Endothelial cell of umbilical vein (primary cell): ENCODE measurements at regions of chr14 and their contacts with region 1.

Region 1: GRCh38 chr14:52068615-52069303 is at the start of gene NID2:
- DNase-seq: peak; percentile 68
- H3K4me3 ChIP-seq: peak within 1 kb of the TSS; percentile 41 to 84 (median 63)
- H3K27ac ChIP-seq: no peak within 1 kb of the TSS
- H3K4me1 ChIP-seq: peaks cover 30% of the 10 kb centered on the region
- H3K27me3 ChIP-seq: peaks cover 0 to 2% of the 10 kb centered on the region in 2 experiments
- CTCF ChIP-seq: no peak
- POLR2A ChIP-seq: no peak
- total RNA-seq, gene NID2: 33.0 and 56.7 TPM in 2 replicates

Region 2: GRCh38 chr14:51318813-51319597 is 749.8 kb before region 1 on chr14:
- CTCF ChIA-PET with region 1: no interaction called
- POLR2A ChIA-PET with region 1: no interaction called
- dilution Hi-C with region 1: no loop called
- intact Hi-C with region 1: no loop called
- DNase-seq: peak; percentile 57
- H3K4me3 ChIP-seq: no peak overlapping the region
- H3K27ac ChIP-seq: no peak overlapping the region
- H3K4me1 ChIP-seq: no peaks in the 10 kb centered on the region
- H3K27me3 ChIP-seq: no peaks in the 10 kb centered on the region
- CTCF ChIP-seq: no peak
- POLR2A ChIP-seq: no peak

Region 3: DNA sequence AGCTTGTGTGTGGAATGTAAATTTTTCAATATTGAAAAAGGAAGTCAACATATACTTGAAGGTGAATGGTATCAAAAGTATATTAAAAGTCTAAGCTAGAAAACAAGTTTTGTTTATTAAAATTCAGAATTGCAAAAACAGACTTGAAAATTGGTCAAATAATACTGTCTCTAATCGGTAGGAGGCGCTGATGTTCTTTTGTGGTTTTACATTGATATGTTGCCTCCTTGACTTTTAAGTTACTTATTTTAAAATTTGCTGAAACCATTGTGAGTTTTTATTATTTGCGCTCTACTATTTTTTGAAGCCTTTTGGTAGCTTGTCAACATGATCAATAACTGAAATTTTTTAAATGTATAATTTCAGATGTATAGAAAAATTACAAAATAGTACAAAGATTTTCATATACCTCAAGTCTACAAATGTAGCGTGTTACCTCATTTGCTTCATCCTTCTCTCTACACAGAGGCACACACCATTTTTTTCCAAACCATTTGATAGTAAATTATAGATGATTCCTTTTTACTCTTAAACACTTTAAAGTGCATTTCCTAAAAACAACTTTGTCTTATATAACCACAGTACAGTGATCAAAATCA is 72.5 kb before region 1 on chr14:
- CTCF ChIA-PET with region 1: interaction called, 52 read pairs
- POLR2A ChIA-PET with region 1: no interaction called
- dilution Hi-C with region 1: no loop called
- intact Hi-C with region 1: loop called (anchors 1 kb)
- DNase-seq: peak; percentile 66
- H3K4me3 ChIP-seq: no peak overlapping the region
- H3K27ac ChIP-seq: no peak overlapping the region
- H3K4me1 ChIP-seq: no peaks in the 10 kb centered on the region
- H3K27me3 ChIP-seq: no peaks in the 10 kb centered on the region
- CTCF ChIP-seq: peak; percentile 37 to 52
- POLR2A ChIP-seq: no peak

Region 4: DNA sequence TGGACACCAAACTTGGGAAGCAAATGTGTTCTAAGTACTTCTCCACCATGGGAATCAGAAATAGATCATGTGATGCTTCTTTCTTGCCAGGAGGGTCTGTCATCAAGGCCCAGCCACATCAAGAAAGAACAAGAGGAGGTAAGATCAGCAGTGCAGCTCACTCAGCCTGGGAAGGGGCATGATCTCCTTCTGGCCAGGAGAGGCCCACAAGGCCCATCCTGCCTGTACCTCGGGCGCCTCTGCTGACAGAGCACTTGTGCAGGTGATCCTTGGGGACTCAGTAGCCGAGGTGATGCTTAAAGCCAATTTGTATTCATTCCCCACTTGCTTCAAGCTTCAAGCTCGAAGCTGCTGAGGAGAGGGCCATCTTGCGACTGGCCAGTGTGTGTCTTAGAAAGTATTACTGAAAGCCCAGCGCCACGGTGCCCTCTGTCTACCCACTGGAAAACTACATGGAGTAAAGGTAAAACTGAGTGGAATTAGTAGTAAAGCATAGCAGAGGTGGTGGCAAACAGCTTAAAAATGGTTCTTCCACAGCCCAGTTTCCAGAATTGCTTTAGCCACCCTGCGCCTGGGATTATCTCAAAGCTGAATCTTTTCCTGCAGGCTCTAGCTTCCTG is 53.2 kb before region 1 on chr14:
- CTCF ChIA-PET with region 1: interaction called, 43 read pairs
- POLR2A ChIA-PET with region 1: no interaction called
- dilution Hi-C with region 1: no loop called
- intact Hi-C with region 1: loop called (anchors 1 kb)
- DNase-seq: peak; percentile 51
- H3K4me3 ChIP-seq: no peak overlapping the region
- H3K27ac ChIP-seq: no peak overlapping the region
- H3K4me1 ChIP-seq: peaks cover 21% of the 10 kb centered on the region
- H3K27me3 ChIP-seq: peaks cover 0 to 2% of the 10 kb centered on the region in 2 experiments
- CTCF ChIP-seq: peak; percentile 40 to 58
- POLR2A ChIP-seq: no peak

Region 5: DNA sequence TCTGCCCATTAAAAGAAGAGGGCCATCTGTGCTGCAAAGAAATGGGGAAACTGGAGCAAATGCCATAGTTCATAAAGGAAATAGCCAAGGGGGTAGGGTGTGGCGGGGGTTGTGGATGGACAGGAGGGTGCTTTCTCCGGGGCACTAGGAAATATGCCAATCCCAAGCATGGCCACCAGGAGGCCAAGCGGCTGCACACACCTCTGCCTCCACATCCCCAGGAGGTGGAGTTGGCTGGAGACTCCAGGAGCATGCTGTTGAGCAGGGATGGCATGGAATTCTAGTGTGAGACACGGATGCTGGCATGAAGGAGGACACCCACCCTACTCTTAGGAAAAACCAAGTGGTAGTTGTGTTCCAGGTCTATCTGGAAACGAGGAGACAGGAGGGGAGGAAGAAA is 25.1 kb before region 1 on chr14:
- CTCF ChIA-PET with region 1: interaction called, 4 read pairs
- POLR2A ChIA-PET with region 1: no interaction called
- dilution Hi-C with region 1: no loop called
- intact Hi-C with region 1: loop called (anchors 2 kb)
- DNase-seq: peak; percentile 37
- H3K4me3 ChIP-seq: no peak overlapping the region
- H3K27ac ChIP-seq: no peak overlapping the region
- H3K4me1 ChIP-seq: peaks cover 4% of the 10 kb centered on the region
- H3K27me3 ChIP-seq: peaks cover 0 to 2% of the 10 kb centered on the region in 2 experiments
- CTCF ChIP-seq: peak; percentile 54 to 76
- POLR2A ChIP-seq: no peak

Region 6: GRCh38 chr14:52131640-52132320 is 63.0 kb after region 1 on chr14:
- CTCF ChIA-PET with region 1: interaction called, 4 read pairs
- POLR2A ChIA-PET with region 1: no interaction called
- dilution Hi-C with region 1: no loop called
- intact Hi-C with region 1: loop called (anchors 1 kb)
- DNase-seq: peak; percentile 86
- H3K4me3 ChIP-seq: no peak overlapping the region
- H3K27ac ChIP-seq: no peak overlapping the region
- H3K4me1 ChIP-seq: peaks cover 3% of the 10 kb centered on the region
- H3K27me3 ChIP-seq: no peaks in the 10 kb centered on the region
- CTCF ChIP-seq: peak; percentile 65 to 78
- POLR2A ChIP-seq: no peak

Region 7: DNA sequence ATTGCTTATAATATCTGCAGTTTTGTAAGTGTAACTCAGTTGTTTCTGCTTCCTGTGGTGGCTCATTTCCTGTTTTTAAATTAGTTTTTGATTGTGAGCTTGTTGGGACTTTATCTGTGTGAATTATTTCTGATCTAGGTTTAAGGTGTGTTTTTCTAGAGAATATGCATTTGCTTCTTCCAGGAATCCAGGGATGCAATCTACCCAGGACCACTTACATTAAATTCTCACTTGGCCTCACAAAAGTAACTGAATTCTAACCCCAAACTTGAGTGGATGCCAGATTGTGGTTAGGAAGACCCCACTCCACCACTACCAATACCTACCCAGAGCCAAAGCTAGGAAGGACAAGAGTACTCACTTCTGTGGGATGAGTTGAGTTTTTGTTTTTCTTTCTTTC is 673.1 kb after region 1 on chr14:
- CTCF ChIA-PET with region 1: no interaction called
- POLR2A ChIA-PET with region 1: no interaction called
- dilution Hi-C with region 1: no loop called
- intact Hi-C with region 1: no loop called
- DNase-seq: peak; percentile 33
- H3K4me3 ChIP-seq: peak overlapping the region in 1 of 3 experiments; percentile 11
- H3K27ac ChIP-seq: peak overlapping the region; percentile 82
- H3K4me1 ChIP-seq: peaks cover 25% of the 10 kb centered on the region
- H3K27me3 ChIP-seq: no peaks in the 10 kb centered on the region
- CTCF ChIP-seq: no peak
- POLR2A ChIP-seq: no peak